ENCODE measurements at regions of chr2 and their contacts with region 1.

Region 1: GRCh38 chr2:112692496-112692911 is 28.3 kb upstream of the NT5DC4 start:
- DNase-seq: peak; percentile 90
- H3K4me3 Mint-ChIP-seq: peak overlapping the region; percentile 50
- H3K27ac Mint-ChIP-seq: peak overlapping the region; percentile 80
- H3K4me1 Mint-ChIP-seq: peaks cover 33% of the 10 kb centered on the region
- H3K27me3 Mint-ChIP-seq: no peaks in the 10 kb centered on the region

Region 2: DNA sequence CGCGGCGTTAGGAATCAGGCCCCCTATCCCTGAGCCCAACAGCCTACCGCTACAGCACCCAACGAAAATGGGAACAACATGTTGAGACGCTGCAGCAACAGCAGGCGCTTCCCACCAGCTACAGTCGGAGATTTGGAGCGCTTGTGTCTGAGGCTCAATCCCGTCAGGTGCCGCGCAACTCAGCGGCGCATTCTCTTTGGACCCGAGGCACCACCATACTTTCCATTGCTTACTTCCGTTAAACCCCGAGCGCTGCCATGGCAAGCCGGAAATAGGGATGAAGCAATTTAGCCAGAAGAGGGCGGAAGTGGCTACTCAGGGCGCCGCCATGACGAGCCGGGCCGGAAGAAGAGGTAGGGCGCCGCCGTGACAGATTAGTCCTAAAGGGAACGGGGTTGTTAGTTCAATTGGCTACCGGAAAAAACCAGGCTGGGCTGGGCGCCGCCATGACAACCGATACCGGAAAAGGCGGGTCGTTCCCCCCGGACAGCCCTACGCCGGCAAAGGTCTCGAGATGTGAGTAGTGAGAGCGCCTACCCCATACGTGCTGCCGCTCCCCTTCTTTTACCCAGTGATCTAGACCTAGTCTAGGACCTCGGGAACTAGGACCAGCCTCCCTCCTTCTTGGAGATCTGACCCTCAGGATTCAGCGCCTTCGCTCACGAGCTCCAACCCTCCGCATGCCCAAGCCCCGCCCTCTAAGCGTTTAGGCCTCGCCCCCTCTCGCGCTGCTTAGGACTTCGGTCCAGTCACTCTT is 108.2 kb before region 1 on chr2 and contains the start of gene CHCHD5:
- intact Hi-C with region 1: loop called (anchors 2 kb)
- DNase-seq: peak; percentile 98
- H3K4me3 Mint-ChIP-seq: peak within 1 kb of the TSS; percentile 93
- H3K27ac Mint-ChIP-seq: peak within 1 kb of the TSS; percentile 99
- H3K4me1 Mint-ChIP-seq: peaks cover 33% of the 10 kb centered on the region
- H3K27me3 Mint-ChIP-seq: no peaks in the 10 kb centered on the region
- total RNA-seq, gene CHCHD5: 36.4 and 37.6 TPM in 2 replicates

Region 3: DNA sequence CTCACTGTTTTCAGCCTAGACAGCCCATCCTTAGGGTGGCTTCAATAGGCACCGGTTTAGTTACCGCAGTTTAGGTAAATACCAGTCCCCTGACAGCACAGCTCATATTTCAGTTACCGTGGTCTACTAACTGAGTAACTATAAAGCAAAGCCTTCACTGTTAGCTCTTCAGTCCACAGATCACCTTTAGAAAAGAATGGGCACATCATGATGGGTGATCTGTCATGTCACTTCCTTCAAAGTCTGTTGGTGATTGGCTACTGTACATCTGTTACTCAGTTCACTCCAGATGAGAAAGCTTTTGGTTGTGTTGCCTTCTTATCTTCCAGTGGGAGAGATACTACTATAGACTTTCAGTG is 25.8 kb before region 1 on chr2:
- intact Hi-C with region 1: no loop called
- DNase-seq: no peak
- H3K4me3 Mint-ChIP-seq: no peak overlapping the region
- H3K27ac Mint-ChIP-seq: peak overlapping the region; percentile 60
- H3K4me1 Mint-ChIP-seq: peaks cover 2% of the 10 kb centered on the region
- H3K27me3 Mint-ChIP-seq: no peaks in the 10 kb centered on the region

Region 4: DNA sequence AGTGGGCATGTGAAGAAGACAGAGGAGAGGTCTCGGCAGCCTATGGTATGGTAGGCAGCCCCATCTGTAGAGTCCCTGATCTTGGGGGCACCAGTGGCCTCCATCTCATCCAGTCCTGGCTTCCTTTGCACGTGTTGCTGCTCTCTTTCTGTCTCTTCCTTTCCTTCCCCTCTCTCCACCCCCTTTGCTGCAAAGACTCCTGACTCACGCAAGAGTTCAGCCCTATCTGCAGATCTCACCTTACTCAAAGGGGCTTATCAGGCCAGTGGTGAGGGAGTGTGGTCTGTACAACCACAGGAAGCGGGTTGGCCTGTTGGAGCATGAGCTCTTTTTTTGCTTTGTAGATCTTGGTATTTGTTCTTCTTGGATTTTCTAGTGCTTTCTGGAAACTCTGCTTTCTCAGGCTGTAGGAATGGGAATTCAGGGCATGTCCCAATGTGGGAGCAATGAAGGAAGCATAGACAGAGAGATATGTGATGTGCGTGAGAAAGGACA is 13.7 kb after region 1 on chr2:
- intact Hi-C with region 1: loop called (anchors 1 kb)
- DNase-seq: peak; percentile 94
- H3K4me3 Mint-ChIP-seq: peak overlapping the region; percentile 74
- H3K27ac Mint-ChIP-seq: peak overlapping the region; percentile 69
- H3K4me1 Mint-ChIP-seq: peaks cover 45% of the 10 kb centered on the region
- H3K27me3 Mint-ChIP-seq: no peaks in the 10 kb centered on the region

Region 5: DNA sequence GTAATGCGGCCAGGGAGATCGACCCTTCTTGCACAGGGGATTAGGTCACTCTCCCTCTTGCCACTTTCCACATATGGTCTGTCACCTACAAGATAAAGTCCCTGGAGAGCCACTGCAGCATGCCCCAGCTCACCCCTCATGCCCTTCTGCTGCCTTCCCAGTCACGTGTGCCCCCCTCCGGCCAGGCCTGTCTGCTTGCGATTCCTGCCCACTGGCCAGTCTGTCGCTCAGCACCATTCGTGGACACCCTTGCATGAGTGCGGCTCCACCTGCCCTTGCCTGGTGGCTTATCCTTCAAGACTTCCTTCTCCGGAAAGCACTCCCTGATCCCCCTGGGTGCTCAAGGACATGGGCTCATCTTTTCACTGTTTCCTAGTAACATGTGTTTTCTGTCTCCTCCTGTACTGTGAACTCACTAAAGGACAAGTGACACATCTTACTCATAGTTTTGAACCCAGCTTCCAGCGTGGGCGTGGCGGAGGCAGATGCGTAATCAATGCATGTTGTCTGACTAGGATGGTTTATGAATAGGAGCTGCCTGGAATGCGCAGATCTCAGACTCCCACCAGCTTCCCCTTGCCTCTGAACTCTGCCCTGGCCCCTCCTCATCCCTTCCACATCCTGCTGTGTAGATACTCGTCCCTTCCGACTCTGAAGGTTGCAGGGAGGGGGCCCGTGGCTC is 20.5 kb after region 1 on chr2:
- intact Hi-C with region 1: loop called (anchors 1 kb)
- DNase-seq: peak; percentile 76
- H3K4me3 Mint-ChIP-seq: peak overlapping the region; percentile 59
- H3K27ac Mint-ChIP-seq: peak overlapping the region; percentile 85
- H3K4me1 Mint-ChIP-seq: peaks cover 36% of the 10 kb centered on the region
- H3K27me3 Mint-ChIP-seq: peaks cover 3% of the 10 kb centered on the region

Region 6: GRCh38 chr2:112726497-112727190 is 34.1 kb after region 1 on chr2:
- intact Hi-C with region 1: loop called (anchors 2 kb)
- DNase-seq: peak; percentile 97
- H3K4me3 Mint-ChIP-seq: no peak overlapping the region
- H3K27ac Mint-ChIP-seq: peak overlapping the region; percentile 32
- H3K4me1 Mint-ChIP-seq: peaks cover 25% of the 10 kb centered on the region
- H3K27me3 Mint-ChIP-seq: peaks cover 2% of the 10 kb centered on the region

Region 7: GRCh38 chr2:112881217-112881985 is 188.9 kb after region 1 on chr2:
- intact Hi-C with region 1: no loop called
- DNase-seq: peak; percentile 68
- H3K4me3 Mint-ChIP-seq: peak overlapping the region; percentile 46
- H3K27ac Mint-ChIP-seq: peak overlapping the region; percentile 80
- H3K4me1 Mint-ChIP-seq: peaks cover 27% of the 10 kb centered on the region
- H3K27me3 Mint-ChIP-seq: no peaks in the 10 kb centered on the region